Activated CD8-positive, alpha-beta T cell treated with anti-CD3 and anti-CD28 coated beads for 36 hours (primary cell): ENCODE measurements at regions of chr3 and their contacts with region 1.

Region 1: DNA sequence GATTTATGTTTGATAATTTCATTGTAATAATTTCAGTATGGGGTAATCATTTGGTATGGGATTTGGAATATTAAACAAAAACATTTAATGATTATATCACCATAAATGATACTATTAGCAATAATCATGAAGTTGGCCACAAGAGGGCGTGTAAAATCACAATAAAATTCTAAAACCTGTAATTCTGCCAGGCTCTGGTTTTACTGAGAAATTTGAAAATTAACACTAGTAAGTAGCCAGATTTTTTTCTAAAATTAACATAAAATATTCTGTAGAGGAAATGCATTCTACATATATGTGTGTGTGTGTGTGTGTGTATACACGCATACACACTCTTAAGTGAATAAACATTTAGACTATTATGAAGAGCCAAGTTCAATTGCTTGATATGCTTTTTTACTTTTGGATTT is 40.5 kb downstream of the FEZF2 start:
- DNase-seq: no peak
- ATAC-seq: no peak
- H3K4me3 Mint-ChIP-seq: no peak overlapping the region
- H3K27ac Mint-ChIP-seq: no peak overlapping the region
- H3K4me1 Mint-ChIP-seq: no peaks in the 10 kb centered on the region
- H3K27me3 Mint-ChIP-seq: peaks cover 5% of the 10 kb centered on the region
- CTCF ChIP-seq: peak; percentile 73

Region 2: DNA sequence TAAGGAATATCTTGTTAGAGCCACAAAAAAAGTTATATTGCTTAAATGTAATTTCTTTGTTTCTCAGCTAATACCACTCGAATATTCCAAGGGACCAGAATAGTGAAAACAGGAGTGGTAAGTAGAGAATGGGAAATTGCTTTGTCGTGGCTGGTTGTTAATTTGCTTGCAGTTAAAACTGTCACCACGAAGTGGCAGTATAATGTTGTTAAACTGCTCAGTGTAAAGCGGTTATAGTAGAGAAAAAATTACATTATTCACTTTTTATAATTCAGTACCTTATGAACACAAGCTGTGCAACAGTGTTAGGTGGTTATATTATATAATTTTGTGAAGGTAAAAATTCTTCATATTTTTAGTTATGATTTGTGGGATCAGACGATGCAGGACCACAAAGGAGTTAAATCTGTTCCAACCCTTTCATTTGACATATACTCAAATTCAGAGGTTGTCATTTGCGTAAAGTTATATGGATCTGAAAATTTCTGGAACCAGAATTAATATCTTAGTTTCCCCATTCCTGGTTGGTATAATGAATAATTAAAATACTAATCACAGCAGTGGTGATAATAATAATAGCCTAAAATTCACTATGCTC is 131.3 kb before region 1 on chr3:
- CTCF ChIA-PET with region 1: interaction called, 10 read pairs
- POLR2A ChIA-PET with region 1: no interaction called
- intact Hi-C with region 1: no loop called
- DNase-seq: no peak
- ATAC-seq: no peak
- H3K4me3 Mint-ChIP-seq: no peak overlapping the region
- H3K27ac Mint-ChIP-seq: no peak overlapping the region
- H3K4me1 Mint-ChIP-seq: no peaks in the 10 kb centered on the region
- H3K27me3 Mint-ChIP-seq: no peaks in the 10 kb centered on the region
- CTCF ChIP-seq: peak; percentile 58

Region 3: GRCh38 chr3:62558549-62559112 is 225.8 kb after region 1 on chr3:
- CTCF ChIA-PET with region 1: no interaction called
- POLR2A ChIA-PET with region 1: no interaction called
- intact Hi-C with region 1: loop called (anchors 5 kb)
- DNase-seq: peak; percentile 14
- ATAC-seq: no peak
- H3K4me3 Mint-ChIP-seq: no peak overlapping the region
- H3K27ac Mint-ChIP-seq: no peak overlapping the region
- H3K4me1 Mint-ChIP-seq: no peaks in the 10 kb centered on the region
- H3K27me3 Mint-ChIP-seq: no peaks in the 10 kb centered on the region
- CTCF ChIP-seq: peak; percentile 46